Heart left ventricle (tissue), 16 donors: ENCODE measurements at regions of chr9 and their contacts with region 1.

Region 1: GRCh38 chr9:85522459-85523092 is 219.2 kb downstream of the AGTPBP1 start:
- DNase-seq: peak; percentile 40 to 86 (median 59)
- ATAC-seq: peak; percentile 50 to 85 (median 77)
- H3K4me3 ChIP-seq: peak overlapping the region in 11 of 12 donors; percentile 18 to 60 (median 48)
- H3K27ac ChIP-seq: peak overlapping the region; percentile 41 to 91 (median 79)
- H3K4me1 ChIP-seq: peaks cover 0 to 40% (median 18%) of the 10 kb centered on the region in 12 donors
- H3K27me3 ChIP-seq: peaks cover 0 to 11% (median 0%) of the 10 kb centered on the region in 9 donors
- CTCF ChIP-seq: no peak
- POLR2A ChIP-seq: no peak

Region 2: DNA sequence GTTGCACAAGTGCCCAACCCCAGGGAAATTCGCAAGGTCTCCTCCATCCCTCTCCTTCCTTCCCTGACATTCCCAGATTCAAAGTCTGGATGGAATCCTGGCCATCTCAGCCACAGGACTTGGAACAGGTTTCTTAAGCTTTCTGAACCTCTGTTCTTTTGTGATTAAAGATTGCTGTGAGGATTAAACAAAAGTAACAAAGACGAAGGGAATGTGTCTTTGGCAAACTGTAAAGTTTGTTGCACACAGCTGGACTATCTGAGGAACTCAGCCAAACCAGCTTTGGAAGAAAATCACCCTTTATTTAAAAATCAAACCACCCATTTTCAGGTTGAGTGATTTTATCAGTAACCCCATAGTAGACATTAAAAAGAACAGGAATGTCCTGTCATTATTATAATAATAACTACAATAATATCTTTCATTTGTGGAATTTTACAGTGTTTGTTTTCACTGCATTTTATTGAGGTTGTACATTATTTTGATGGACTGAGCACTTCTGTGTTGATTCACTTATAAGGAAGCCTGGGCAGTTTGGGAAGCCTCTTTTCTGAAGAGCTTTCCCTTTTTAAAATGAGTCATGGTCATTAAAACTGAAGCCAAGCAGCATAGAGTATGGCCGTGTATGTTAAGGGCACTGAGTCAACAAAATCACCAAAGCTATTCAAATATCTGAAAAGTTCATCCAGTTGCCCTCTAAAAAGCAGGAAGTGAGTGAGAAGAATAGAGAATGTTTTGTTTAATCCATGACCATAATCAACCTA is 91.1 kb before region 1 on chr9:
- intact Hi-C with region 1: loop called in 1 of 10 experiments (anchors 5 kb)
- DNase-seq: no peak
- ATAC-seq: no peak
- H3K4me3 ChIP-seq: no peak overlapping the region
- H3K27ac ChIP-seq: peak overlapping the region in 8 of 12 donors; percentile 30 to 68 (median 56)
- H3K4me1 ChIP-seq: peaks cover 0 to 11% (median 2%) of the 10 kb centered on the region in 12 donors
- H3K27me3 ChIP-seq: peaks cover 0 to 6% (median 0%) of the 10 kb centered on the region in 9 donors
- CTCF ChIP-seq: no peak
- POLR2A ChIP-seq: no peak

Region 3: DNA sequence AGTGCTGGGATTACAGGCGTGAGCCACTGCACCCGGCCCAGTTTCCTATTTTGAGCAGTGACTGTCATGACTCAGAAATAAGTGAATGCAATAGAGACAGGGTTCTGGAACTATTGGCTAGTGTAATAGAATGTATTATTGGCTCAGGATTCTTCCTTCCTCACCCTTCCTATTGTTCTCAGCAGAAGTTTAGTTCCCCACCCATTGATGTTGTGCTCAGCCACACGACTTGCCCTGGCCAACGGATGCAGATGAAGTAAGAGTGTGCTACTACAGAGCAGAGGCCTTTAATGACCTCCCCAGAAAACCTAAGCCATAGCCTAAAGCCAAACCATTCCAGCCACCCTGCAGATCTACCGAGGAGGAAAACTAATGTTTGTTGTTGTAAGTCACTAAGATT is 68.7 kb before region 1 on chr9:
- intact Hi-C with region 1: loop called in 1 of 10 experiments (anchors 5 kb)
- DNase-seq: peak in 4 of 5 donors; percentile 38 to 49 (median 43)
- ATAC-seq: peak; percentile 71 to 99 (median 84)
- H3K4me3 ChIP-seq: no peak overlapping the region
- H3K27ac ChIP-seq: peak overlapping the region in 3 of 12 donors; percentile 29 to 60 (median 43)
- H3K4me1 ChIP-seq: peaks cover 0 to 4% (median 0%) of the 10 kb centered on the region in 12 donors
- H3K27me3 ChIP-seq: no peaks in the 10 kb centered on the region
- CTCF ChIP-seq: no peak
- POLR2A ChIP-seq: no peak

Region 4: GRCh38 chr9:85466834-85467233 is 55.7 kb before region 1 on chr9:
- intact Hi-C with region 1: no loop called
- DNase-seq: no peak
- ATAC-seq: no peak
- H3K4me3 ChIP-seq: no peak overlapping the region
- H3K27ac ChIP-seq: no peak overlapping the region
- H3K4me1 ChIP-seq: no peaks in the 10 kb centered on the region
- H3K27me3 ChIP-seq: no peaks in the 10 kb centered on the region
- CTCF ChIP-seq: no peak
- POLR2A ChIP-seq: no peak